ENCODE measurements at regions of chr15 and their contacts with region 1.

Region 1: DNA sequence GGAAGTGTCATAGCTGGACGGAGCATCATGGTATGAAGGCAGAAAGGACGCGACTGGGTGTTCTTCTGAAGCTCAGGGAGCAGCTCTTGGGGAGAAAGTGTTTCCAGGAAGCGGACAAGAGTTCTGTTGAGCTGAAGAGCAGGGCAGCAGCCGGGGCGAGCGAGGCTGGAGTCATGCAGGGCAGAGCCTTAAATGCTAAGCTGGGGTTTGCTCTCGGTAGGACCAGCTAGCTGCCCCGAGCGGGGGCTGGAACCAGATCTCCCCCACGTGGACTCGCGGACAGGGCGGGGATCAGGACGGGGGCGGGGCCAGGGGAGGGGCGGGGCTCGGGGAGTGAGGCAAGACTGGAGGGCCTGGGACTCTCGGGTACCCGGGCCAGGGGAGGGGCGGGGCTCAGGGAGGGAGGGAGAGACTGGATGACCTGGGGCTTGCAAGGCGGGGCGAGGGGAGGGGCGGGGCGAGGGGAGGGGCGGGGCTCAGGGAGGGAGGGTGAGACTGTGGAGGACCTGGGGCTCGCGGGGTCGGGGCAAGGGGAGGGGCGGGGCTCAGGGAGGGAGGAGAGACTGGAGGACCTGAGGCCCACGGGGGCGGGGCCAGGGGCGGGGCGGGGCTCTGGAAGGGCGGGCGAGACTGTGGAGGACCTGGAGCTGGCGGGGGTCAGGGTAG is 486 bp upstream of the FAH start:
- DNase-seq: peak; percentile 98
- ATAC-seq: peak; percentile 81
- H3K4me3 Mint-ChIP-seq: peak overlapping the region; percentile 77
- H3K27ac Mint-ChIP-seq: peak overlapping the region; percentile 76
- H3K4me1 Mint-ChIP-seq: peaks cover 27% of the 10 kb centered on the region
- H3K27me3 Mint-ChIP-seq: no peaks in the 10 kb centered on the region

Region 2: GRCh38 chr15:78540141-78540928 is 1612.0 kb before region 1 on chr15 and contains the start of gene PSMA4:
- CTCF ChIA-PET with region 1: no interaction called
- POLR2A ChIA-PET with region 1: no interaction called
- intact Hi-C with region 1: loop called in 1 of 2 experiments (anchors 2 kb)
- DNase-seq: peak; percentile 96
- ATAC-seq: peak; percentile 86
- H3K4me3 Mint-ChIP-seq: peak within 1 kb of the TSS; percentile 91
- H3K27ac Mint-ChIP-seq: peak within 1 kb of the TSS; percentile 98
- H3K4me1 Mint-ChIP-seq: peaks cover 27% of the 10 kb centered on the region
- H3K27me3 Mint-ChIP-seq: no peaks in the 10 kb centered on the region
- total RNA-seq, gene PSMA4: 273 to 312 TPM

Region 3: GRCh38 chr15:79310983-79311900 is 841.1 kb before region 1 on chr15 and contains the start of gene TMED3:
- CTCF ChIA-PET with region 1: no interaction called
- POLR2A ChIA-PET with region 1: no interaction called
- intact Hi-C with region 1: loop called in 1 of 2 experiments (anchors 5 kb)
- DNase-seq: peak; percentile 90
- ATAC-seq: peak; percentile 98
- H3K4me3 Mint-ChIP-seq: peak within 1 kb of the TSS; percentile 81
- H3K27ac Mint-ChIP-seq: peak within 1 kb of the TSS; percentile 77
- H3K4me1 Mint-ChIP-seq: peaks cover 28% of the 10 kb centered on the region
- H3K27me3 Mint-ChIP-seq: peaks cover 23% of the 10 kb centered on the region
- total RNA-seq, gene TMED3: 33.5 to 37.2 TPM

Region 4: GRCh38 chr15:79896637-79897379 is 255.5 kb before region 1 on chr15 and contains the start of gene MTHFS:
- CTCF ChIA-PET with region 1: no interaction called
- POLR2A ChIA-PET with region 1: interaction called, 7 read pairs
- intact Hi-C with region 1: loop called (anchors 1 to 10 kb)
- DNase-seq: peak; percentile 87
- ATAC-seq: peak; percentile 81
- H3K4me3 Mint-ChIP-seq: peak within 1 kb of the TSS; percentile 97
- H3K27ac Mint-ChIP-seq: peak within 1 kb of the TSS; percentile 100
- H3K4me1 Mint-ChIP-seq: peaks cover 46% of the 10 kb centered on the region
- H3K27me3 Mint-ChIP-seq: no peaks in the 10 kb centered on the region
- total RNA-seq, gene MTHFS: 36.1 to 48.5 TPM

Region 5: DNA sequence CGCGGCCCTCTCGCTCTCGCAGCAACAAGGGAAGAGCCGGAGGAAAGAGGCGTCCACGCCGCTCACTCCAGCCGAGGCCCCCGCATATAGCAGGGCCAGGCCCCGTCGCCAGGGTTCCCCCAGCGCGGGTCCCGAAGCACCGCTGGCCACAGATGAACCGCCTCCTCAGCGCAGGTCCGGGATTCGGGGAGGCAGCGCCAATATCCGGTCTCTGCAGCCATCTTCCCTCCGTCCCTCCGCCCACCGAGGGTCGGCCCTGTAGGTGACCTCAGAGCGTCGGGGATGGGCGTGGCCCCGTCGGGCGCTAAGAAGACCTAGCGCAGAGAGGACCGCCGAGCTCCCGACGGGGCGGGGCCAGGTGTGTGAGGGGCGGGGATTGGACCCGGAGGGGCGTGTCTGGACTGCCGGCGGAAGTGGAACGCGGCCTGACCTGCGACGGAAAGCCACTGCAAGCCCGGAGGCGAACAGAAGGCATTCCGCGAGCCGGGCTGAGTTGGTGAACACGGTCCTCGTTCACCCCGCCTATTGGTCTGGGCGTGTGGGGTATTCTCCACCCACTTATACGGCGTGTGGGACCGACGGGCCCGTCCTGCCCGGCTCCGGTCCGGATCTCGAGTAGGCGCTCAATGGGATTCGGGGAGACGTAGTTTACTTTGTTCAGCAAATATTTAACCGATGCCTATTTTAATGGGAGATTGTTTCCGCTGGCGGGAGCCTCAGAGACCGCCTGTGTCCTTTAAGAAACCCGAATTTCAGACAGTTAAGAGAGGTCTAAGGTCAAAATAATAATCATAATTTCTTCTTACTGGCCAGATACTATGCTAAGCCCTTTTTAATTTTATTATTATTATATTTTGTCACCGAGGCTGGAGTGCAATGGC is 228.6 kb before region 1 on chr15:
- CTCF ChIA-PET with region 1: no interaction called
- POLR2A ChIA-PET with region 1: no interaction called
- intact Hi-C with region 1: loop called in 1 of 2 experiments (anchors 1 kb)
- DNase-seq: peak; percentile 99
- ATAC-seq: peak; percentile 94
- H3K4me3 Mint-ChIP-seq: peak overlapping the region; percentile 89
- H3K27ac Mint-ChIP-seq: peak overlapping the region; percentile 94
- H3K4me1 Mint-ChIP-seq: peaks cover 23% of the 10 kb centered on the region
- H3K27me3 Mint-ChIP-seq: no peaks in the 10 kb centered on the region

Region 6: GRCh38 chr15:80072285-80072994 is 79.9 kb before region 1 on chr15:
- CTCF ChIA-PET with region 1: interaction called, 3 read pairs
- POLR2A ChIA-PET with region 1: no interaction called
- intact Hi-C with region 1: loop called (anchors 1 to 5 kb)
- DNase-seq: no peak
- ATAC-seq: peak; percentile 98
- H3K4me3 Mint-ChIP-seq: peak overlapping the region; percentile 80
- H3K27ac Mint-ChIP-seq: peak overlapping the region; percentile 40
- H3K4me1 Mint-ChIP-seq: peaks cover 59% of the 10 kb centered on the region
- H3K27me3 Mint-ChIP-seq: no peaks in the 10 kb centered on the region

Region 7: GRCh38 chr15:80710635-80711554 is 558.6 kb after region 1 on chr15:
- CTCF ChIA-PET with region 1: no interaction called
- POLR2A ChIA-PET with region 1: no interaction called
- intact Hi-C with region 1: no loop called
- DNase-seq: peak; percentile 78
- ATAC-seq: peak; percentile 97
- H3K4me3 Mint-ChIP-seq: no peak overlapping the region
- H3K27ac Mint-ChIP-seq: no peak overlapping the region
- H3K4me1 Mint-ChIP-seq: peaks cover 20% of the 10 kb centered on the region
- H3K27me3 Mint-ChIP-seq: no peaks in the 10 kb centered on the region

Region 8: DNA sequence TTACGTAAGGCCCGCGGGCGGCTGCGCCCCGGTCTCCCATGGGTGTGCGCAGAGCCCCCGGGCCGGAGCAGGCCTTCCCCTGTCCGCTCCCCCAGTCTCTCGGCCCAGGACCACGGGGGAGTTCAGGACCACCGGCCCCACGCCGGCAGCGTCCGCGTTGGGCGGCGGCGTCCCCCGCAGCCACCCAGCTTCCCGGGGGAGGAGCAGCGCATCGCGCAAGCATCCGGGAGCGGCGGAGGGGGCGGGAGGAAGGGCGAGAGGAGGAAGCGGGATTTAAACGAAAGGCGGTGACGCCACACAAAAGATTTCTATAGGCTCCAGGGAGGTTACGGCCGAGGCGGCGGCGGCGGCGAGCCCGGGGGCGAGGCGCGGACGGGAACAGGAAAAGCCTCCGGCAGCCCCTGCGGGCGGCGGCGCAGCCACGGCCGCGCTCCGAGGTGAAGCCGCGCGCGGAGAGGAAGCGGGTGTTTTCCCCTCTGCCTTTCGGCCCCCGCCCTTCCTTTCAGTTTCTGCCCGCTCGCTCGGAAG is 848.4 kb after region 1 on chr15 and contains the start of gene TLNRD1:
- CTCF ChIA-PET with region 1: no interaction called
- POLR2A ChIA-PET with region 1: no interaction called
- intact Hi-C with region 1: loop called in 1 of 2 experiments (anchors 5 kb)
- DNase-seq: peak; percentile 90
- ATAC-seq: peak; percentile 70
- H3K4me3 Mint-ChIP-seq: peak within 1 kb of the TSS; percentile 92
- H3K27ac Mint-ChIP-seq: peak within 1 kb of the TSS; percentile 92
- H3K4me1 Mint-ChIP-seq: peaks cover 45% of the 10 kb centered on the region
- H3K27me3 Mint-ChIP-seq: no peaks in the 10 kb centered on the region
- total RNA-seq, gene TLNRD1: 11.2 to 16.9 TPM

Region 9: GRCh38 chr15:81176291-81176893 is 1024.1 kb after region 1 on chr15:
- CTCF ChIA-PET with region 1: no interaction called
- POLR2A ChIA-PET with region 1: no interaction called
- intact Hi-C with region 1: no loop called
- DNase-seq: no peak
- ATAC-seq: no peak
- H3K4me3 Mint-ChIP-seq: no peak overlapping the region
- H3K27ac Mint-ChIP-seq: no peak overlapping the region
- H3K4me1 Mint-ChIP-seq: no peaks in the 10 kb centered on the region
- H3K27me3 Mint-ChIP-seq: peaks cover 9% of the 10 kb centered on the region